ENCODE measurements at regions of chrX and their contacts with region 1.

Region 1: DNA sequence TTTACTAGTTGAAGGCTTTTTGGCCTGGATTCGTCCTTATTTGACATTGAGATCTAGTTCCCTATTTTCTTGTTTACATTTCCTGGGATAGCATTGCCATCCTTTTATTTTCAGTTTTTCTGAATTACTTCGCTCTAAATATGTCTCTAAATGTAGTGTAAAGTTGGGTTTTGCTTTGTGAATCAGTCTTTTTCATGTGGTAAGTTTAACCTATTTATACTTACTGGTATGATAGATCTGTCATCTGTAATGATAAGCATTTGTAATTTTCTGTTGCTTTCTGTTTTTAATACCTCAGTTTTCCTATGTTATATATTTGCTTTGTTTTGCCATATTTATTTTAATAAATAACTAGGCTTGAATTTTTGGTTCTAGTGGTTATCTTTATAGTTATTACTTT is 6.7 kb downstream of the PDK3 start:
- DNase-seq: no peak
- H3K4me3 ChIP-seq: no peak overlapping the region
- H3K27ac ChIP-seq: peak overlapping the region in 1 of 2 donors; percentile 21
- H3K4me1 ChIP-seq: peaks cover 0 to 10% of the 10 kb centered on the region in 2 donors
- H3K27me3 ChIP-seq: no peaks in the 10 kb centered on the region
- CTCF ChIP-seq: no peak

Region 2: GRCh38 chrX:24491749-24492148 is 19.9 kb after region 1 on chrX:
- intact Hi-C with region 1: loop called (anchors 2 kb)
- DNase-seq: no peak
- H3K4me3 ChIP-seq: no peak overlapping the region
- H3K27ac ChIP-seq: peak overlapping the region; percentile 60 to 64
- H3K4me1 ChIP-seq: peaks cover 0 to 12% of the 10 kb centered on the region in 2 donors
- H3K27me3 ChIP-seq: no peaks in the 10 kb centered on the region
- CTCF ChIP-seq: no peak

Measured in ascending aorta (tissue), 2 donors.